ENCODE measurements at regions of chr9 and their contacts with region 1.

Region 1: DNA sequence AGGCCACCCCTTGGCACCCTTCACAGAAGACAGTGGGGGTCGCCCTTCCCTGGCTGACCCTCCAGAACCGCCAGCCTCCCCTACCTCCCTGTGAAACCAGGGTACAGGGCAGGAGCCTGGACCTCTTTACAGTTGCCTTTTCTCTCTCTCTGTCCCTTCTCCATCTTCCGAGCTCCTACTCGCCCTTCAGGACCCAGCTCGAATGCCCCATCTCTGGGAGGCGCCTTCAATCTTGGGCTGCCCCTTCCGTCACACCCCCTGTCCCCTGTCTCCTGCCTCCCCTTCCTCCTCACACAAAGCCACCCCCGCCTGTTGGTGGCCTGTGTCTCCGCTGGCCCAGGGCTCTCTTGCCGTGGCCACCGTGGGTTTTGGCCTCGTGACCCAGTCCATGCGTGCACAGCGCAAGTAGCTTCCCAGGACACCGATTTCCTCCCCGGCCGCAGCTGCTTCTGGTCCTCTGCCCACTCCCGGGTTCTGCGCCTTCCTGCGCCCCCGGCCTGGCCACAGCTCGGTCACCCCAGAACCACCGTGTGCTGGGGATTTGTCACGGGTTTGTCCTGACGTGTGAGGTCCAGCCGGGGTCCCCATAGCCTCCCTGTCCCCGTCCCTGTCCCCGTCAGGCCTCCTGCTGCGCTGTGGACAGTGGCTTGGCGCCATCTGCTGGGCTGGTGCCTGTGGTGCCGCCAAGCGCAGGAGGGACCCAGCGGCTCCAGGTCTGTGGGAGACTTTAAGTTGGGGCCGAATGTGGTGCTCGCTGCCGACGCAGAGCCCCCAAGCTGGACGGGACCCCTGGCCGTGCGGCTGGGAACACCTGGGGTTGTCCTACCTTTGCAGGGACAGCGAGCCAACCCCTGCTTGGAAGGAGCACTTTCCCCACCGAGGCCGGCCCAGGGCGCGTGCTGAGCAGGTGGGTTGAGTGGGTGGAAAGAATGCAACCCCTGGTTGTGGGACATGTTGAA is 4.0 kb upstream of the TMEM250 start:
- DNase-seq: peak; percentile 64
- H3K4me3 ChIP-seq: no peak overlapping the region
- H3K27ac ChIP-seq: no peak overlapping the region
- H3K4me1 ChIP-seq: no peaks in the 10 kb centered on the region
- H3K27me3 ChIP-seq: no peaks in the 10 kb centered on the region
- CTCF ChIP-seq: peak; percentile 93 to 99 (median 96)
- POLR2A ChIP-seq: no peak

Region 2: GRCh38 chr9:135602789-135603481 is 519.8 kb before region 1 on chr9:
- intact Hi-C with region 1: loop called (anchors 10 kb)
- DNase-seq: no peak
- H3K4me3 ChIP-seq: no peak overlapping the region
- H3K27ac ChIP-seq: no peak overlapping the region
- H3K4me1 ChIP-seq: no peaks in the 10 kb centered on the region
- H3K27me3 ChIP-seq: no peaks in the 10 kb centered on the region
- CTCF ChIP-seq: peak; percentile 22 to 60 (median 40)
- POLR2A ChIP-seq: no peak

Region 3: DNA sequence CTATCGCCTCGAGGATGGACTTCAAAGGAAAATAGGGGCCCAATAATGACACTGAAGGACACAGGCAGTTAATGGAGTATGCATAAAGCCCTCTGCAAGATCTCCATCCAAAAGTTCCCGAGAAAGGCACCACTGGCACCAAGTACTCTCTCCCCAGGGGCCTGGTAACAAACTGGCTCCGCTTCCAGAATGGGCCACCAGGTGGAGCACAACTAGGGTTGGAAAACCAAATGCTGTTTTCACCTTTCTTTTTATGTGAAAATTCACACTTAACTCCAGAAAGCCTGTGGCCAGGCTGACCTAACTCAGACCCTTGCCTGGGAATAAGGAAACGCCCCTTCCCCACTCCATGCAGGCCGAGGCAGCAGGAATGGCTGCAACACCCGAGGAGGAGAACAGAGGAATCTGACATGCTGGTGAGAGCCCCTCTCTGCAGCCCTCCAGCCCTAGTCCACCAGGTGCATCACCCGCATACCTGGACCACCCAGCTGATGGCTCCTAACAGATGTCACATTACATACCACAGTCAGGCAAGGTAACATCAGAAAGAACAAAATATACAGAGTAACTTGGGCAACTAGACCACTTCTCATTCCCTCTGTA is 258.2 kb before region 1 on chr9:
- intact Hi-C with region 1: loop called (anchors 5 kb)
- DNase-seq: peak; percentile 19
- H3K4me3 ChIP-seq: no peak overlapping the region
- H3K27ac ChIP-seq: no peak overlapping the region
- H3K4me1 ChIP-seq: no peaks in the 10 kb centered on the region
- H3K27me3 ChIP-seq: no peaks in the 10 kb centered on the region
- CTCF ChIP-seq: peak; percentile 70 to 84 (median 79)
- POLR2A ChIP-seq: no peak

Region 4: DNA sequence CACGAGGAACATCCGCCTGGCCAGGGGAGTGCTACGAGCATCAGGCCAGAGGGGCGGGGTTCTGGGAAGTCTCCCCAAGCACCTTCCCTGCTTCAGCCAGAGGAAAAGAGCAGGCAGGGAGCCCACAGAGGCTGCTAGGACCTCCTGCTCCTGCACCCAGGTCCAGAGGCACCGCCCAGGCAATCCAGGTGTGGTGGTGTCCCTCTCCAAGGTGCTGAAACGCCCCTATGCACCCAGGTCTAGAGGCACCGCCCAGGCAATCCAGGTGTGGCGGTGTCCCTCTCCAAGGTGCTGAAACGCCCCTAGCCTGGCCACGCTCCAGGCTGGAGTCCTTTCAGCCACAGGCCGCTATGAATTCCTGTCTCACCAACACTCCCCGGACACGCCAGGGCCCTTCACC is 150.8 kb before region 1 on chr9:
- intact Hi-C with region 1: loop called (anchors 1 kb)
- DNase-seq: peak; percentile 50
- H3K4me3 ChIP-seq: no peak overlapping the region
- H3K27ac ChIP-seq: no peak overlapping the region
- H3K4me1 ChIP-seq: no peaks in the 10 kb centered on the region
- H3K27me3 ChIP-seq: no peaks in the 10 kb centered on the region
- CTCF ChIP-seq: peak in 1 of 4 experiments; percentile 15
- POLR2A ChIP-seq: no peak

Region 5: GRCh38 chr9:136089697-136090045 is 33.0 kb before region 1 on chr9:
- intact Hi-C with region 1: loop called (anchors 5 kb)
- DNase-seq: no peak
- H3K4me3 ChIP-seq: no peak overlapping the region
- H3K27ac ChIP-seq: peak overlapping the region; percentile 62 to 66
- H3K4me1 ChIP-seq: peaks cover 8% of the 10 kb centered on the region
- H3K27me3 ChIP-seq: no peaks in the 10 kb centered on the region
- CTCF ChIP-seq: peak in 2 of 4 experiments; percentile 24 to 49
- POLR2A ChIP-seq: no peak

Measured in prostate gland (tissue), 2 donors.